Dorsolateral prefrontal cortex (tissue), 120 donors: ENCODE measurements at regions of chr19 and their contacts with region 1.

Region 1: DNA sequence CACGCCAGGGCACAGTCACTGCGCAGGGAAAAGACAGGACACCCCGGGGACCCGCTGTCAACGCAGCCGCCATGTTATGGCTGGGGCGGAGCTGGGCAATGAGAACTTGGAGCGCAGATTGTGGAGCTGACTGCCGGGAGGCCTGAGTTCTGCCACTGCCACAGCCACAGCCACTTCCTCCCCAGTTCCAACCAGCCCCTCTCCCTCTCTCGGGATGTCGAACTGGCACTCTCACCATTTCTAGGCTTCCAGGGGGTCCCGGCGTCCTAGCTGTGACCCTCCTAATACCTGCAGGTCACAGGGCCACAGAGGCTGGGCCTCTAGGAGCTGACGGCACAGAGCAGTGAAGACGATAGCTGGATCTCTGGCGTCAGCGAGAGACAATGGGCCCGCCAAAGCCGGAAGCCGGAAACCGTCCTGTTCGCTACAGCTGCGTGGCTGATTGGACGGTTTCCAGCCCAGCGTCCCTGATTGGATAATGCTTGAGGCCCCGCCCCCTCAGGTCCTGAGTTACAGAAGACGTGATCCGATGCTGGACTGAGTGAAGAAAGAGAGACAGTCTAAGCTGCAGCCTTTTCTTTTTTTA is at the start of gene ZNF506:
- DNase-seq: peak; percentile 95 to 100 (median 99)
- H3K4me3 ChIP-seq: peak within 1 kb of the TSS; percentile 59 to 98 (median 85)
- H3K27ac ChIP-seq: peak within 1 kb of the TSS; percentile 74 to 97 (median 91)
- H3K27me3 ChIP-seq: no peaks in the 10 kb centered on the region
- CTCF ChIP-seq: peak in 15 of 56 donors; percentile 7 to 34 (median 16)
- total RNA-seq, gene ZNF506: 25.9 to 56.3 (median 37.0) TPM

Region 2: GRCh38 chr19:19663256-19664038 is 158.0 kb before region 1 on chr19 and contains the start of gene ATP13A1:
- intact Hi-C with region 1: loop called in 1 of 2 experiments (anchors 5 kb)
- DNase-seq: peak; percentile 93 to 98 (median 97)
- H3K4me3 ChIP-seq: peak within 1 kb of the TSS; percentile 76 to 100 (median 97)
- H3K27ac ChIP-seq: peak within 1 kb of the TSS; percentile 81 to 100 (median 97)
- H3K27me3 ChIP-seq: no peaks in the 10 kb centered on the region
- CTCF ChIP-seq: peak in 38 of 56 donors; percentile 3 to 61 (median 32)
- total RNA-seq, gene ATP13A1: 45.7 to 107 (median 68.6) TPM

Region 3: DNA sequence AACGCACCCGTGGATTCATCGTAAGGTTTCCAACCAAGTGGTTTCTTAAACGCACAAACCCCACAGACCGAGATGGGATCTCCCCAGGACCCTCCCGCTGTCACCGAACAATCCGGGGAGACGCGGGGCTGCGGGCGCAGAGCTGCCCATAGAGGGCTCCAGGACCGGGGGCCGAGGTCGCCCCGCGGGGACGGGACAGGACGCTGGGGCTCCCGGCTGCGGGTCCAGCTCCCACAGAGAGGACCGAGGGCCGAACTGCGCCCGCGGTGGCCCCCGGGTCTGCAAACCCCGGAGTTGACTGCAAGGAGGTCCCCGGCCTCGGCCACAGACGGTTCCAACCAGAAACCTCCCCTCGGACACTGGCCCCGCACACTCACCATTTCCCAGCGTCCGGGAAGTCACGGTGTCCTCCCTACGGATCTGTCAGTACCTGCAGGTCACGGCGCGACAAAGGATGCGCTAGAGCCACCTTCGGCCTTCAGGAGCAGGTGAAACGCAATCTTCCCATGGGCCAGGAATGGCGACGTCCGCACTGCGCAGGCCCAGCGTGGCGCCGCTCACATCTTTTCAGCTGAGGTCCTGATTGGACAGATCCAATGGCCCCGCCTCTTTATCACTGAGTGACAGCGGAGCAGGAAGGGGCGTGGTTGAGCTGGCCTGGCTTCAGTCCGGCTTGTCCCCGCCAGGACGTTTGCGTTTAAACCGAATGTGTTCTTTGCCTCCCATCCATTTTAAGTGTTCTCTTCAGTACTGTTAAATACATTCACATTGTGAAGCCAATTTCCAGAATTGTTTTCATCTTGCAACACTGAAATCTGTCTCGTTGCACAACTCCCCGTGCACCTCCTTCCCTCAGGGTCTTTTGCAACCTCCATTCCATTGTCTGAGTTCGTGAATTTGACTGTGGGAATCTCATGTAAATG is 88.6 kb before region 1 on chr19 and contains the start of gene ZNF14:
- intact Hi-C with region 1: loop called (anchors 2 to 5 kb)
- DNase-seq: peak; percentile 86 to 96 (median 94)
- H3K4me3 ChIP-seq: peak within 1 kb of the TSS; percentile 31 to 100 (median 95)
- H3K27ac ChIP-seq: peak within 1 kb of the TSS in 53 of 59 donors; percentile 1 to 92 (median 76)
- H3K27me3 ChIP-seq: no peaks in the 10 kb centered on the region
- CTCF ChIP-seq: peak in 25 of 56 donors; percentile 1 to 46 (median 20)
- total RNA-seq, gene ZNF14: 6.8 to 18.5 (median 11.9) TPM

Region 4: DNA sequence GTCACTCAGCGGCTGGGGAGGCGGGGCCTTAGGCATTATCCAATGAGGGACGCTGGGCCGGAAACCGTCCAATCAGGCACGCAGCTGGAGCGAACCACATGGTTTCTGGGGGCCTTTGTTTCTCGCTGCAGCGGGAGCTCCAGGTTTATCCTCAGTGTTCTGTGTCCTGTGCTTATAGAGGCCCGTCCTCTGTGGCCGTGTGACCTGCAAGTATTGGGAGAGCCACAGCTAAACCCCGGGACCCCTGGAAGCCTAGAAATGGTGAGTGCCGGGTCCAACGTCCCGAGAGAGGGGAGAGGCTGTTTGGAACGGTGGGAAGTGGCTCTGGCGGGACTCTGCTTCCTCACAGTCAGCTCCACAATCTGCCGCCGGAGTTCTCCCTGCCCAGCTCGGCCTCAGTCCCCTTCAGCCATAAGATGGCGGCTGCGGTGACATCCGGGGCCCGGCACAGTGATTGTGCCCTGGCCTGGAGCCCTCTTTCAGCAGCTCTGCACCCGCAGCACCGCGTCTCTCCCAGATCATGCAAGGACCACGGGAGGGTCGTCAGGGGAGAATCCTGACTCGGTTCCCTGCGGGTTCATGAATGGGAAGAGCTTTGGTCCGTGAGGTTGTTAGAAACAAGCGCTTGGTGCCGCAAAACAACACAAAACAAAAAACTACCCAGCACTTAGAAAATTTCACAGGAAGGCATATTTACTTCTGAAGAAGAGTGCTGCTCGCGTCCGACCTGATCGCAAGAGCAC is 44.5 kb after region 1 on chr19 and contains the start of gene ZNF253:
- intact Hi-C with region 1: loop called in 1 of 2 experiments (anchors 5 kb)
- DNase-seq: peak; percentile 96 to 99 (median 98)
- H3K4me3 ChIP-seq: peak within 1 kb of the TSS; percentile 56 to 97 (median 85)
- H3K27ac ChIP-seq: peak within 1 kb of the TSS; percentile 75 to 99 (median 95)
- H3K27me3 ChIP-seq: no peaks in the 10 kb centered on the region
- CTCF ChIP-seq: peak in 6 of 56 donors; percentile 8 to 22 (median 14)
- total RNA-seq, gene ZNF253: 14.3 to 34.6 (median 21.3) TPM